Naive thymus-derived CD4-positive, alpha-beta T cell (primary cell): ENCODE measurements at regions of chr6 and their contacts with region 1.

Region 1: DNA sequence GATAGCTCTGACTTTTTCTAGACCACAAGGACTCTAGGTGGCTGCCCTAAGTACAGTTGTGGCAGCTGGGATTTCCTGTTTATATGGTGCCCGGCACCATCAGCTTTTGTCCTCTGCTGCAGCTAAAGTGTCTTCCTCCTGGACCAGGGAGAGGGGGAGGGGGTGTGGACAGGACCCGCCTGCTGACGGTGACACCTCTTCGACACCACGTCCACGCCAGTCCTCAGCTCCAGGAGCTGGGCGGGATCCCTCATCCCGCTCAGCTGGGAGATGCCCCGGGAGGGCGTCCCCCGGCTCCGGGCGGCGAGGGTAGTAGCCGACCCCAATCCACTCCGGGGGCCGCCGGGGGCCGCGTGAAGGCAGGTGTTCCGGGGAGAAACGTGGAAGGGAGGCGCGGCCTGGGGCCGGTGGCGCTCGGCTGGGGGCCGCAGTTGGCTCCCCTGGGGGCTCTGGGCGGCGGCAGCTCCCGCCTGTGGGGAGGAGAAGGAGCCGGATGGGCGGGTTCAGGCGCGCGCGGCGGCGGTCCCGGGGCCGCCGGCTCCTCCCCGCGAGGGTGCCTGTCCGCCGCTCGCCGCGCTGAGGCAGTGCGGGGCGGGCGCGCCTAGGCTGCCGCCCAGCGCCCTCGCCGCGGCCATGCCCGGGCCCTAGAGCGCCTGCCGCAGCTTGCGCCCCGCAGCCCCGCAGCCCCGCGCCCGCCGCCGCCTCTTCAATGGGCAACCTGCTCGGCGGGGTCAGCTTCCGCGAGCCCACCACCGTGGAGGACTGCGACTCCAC is at the start of gene OGFRL1:
- DNase-seq: peak; percentile 45 to 74 (median 64)
- ATAC-seq: peak; percentile 94
- H3K4me3 ChIP-seq: peak within 1 kb of the TSS; percentile 68
- H3K4me3 Mint-ChIP-seq: peak within 1 kb of the TSS; percentile 76 to 88 (median 83)
- H3K27ac ChIP-seq: peak within 1 kb of the TSS; percentile 70
- H3K27ac Mint-ChIP-seq: peak within 1 kb of the TSS; percentile 78 to 93 (median 83)
- H3K4me1 ChIP-seq: peaks cover 5 to 26% of the 10 kb centered on the region in 2 donors
- H3K4me1 Mint-ChIP-seq: peaks cover 29 to 43% (median 35%) of the 10 kb centered on the region in 7 donors
- H3K27me3 ChIP-seq: no peaks in the 10 kb centered on the region
- H3K27me3 Mint-ChIP-seq: peaks cover 0 to 24% (median 0%) of the 10 kb centered on the region in 5 donors
- total RNA-seq, gene OGFRL1: 4.3 to 30.4 (median 4.7) TPM

Region 2: GRCh38 chr6:71190809-71191208 is 97.6 kb before region 1 on chr6:
- CTCF ChIA-PET with region 1: no interaction called
- POLR2A ChIA-PET with region 1: no interaction called
- intact Hi-C with region 1: loop called in 1 of 2 experiments (anchors 2 kb)
- DNase-seq: peak in 1 of 9 donors; percentile 2
- ATAC-seq: no peak
- H3K4me3 ChIP-seq: no peak overlapping the region
- H3K4me3 Mint-ChIP-seq: no peak overlapping the region
- H3K27ac ChIP-seq: no peak overlapping the region
- H3K27ac Mint-ChIP-seq: no peak overlapping the region
- H3K4me1 ChIP-seq: no peaks in the 10 kb centered on the region
- H3K4me1 Mint-ChIP-seq: peaks cover 0 to 3% (median 0%) of the 10 kb centered on the region in 7 donors
- H3K27me3 ChIP-seq: no peaks in the 10 kb centered on the region
- H3K27me3 Mint-ChIP-seq: peaks cover 0 to 11% (median 11%) of the 10 kb centered on the region in 5 donors

Region 3: DNA sequence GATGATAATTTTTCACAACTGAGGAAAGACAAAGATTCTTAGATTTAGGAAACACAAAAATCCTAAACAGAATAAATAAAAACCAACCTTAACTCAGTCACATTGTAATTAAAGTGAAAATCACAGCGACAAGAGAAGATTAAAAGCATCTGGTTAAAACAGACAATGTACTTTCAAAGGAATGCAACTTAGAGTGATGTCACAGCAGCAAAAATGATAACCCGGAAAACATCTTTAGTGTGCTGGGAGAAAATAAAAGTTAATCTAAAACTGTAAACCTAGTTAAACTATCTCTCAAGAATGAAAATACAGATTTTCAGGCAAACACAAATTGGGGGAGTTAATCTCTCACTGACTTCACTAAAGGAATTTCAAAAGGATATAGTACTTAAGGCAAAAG is 76.6 kb before region 1 on chr6:
- CTCF ChIA-PET with region 1: no interaction called
- POLR2A ChIA-PET with region 1: no interaction called
- intact Hi-C with region 1: no loop called
- DNase-seq: no peak
- ATAC-seq: no peak
- H3K4me3 ChIP-seq: no peak overlapping the region
- H3K4me3 Mint-ChIP-seq: no peak overlapping the region
- H3K27ac ChIP-seq: no peak overlapping the region
- H3K27ac Mint-ChIP-seq: no peak overlapping the region
- H3K4me1 ChIP-seq: no peaks in the 10 kb centered on the region
- H3K4me1 Mint-ChIP-seq: no peaks in the 10 kb centered on the region
- H3K27me3 ChIP-seq: no peaks in the 10 kb centered on the region
- H3K27me3 Mint-ChIP-seq: peaks cover 5 to 26% (median 6%) of the 10 kb centered on the region in 5 donors

Region 4: GRCh38 chr6:71228461-71229041 is 59.9 kb before region 1 on chr6:
- CTCF ChIA-PET with region 1: no interaction called
- POLR2A ChIA-PET with region 1: no interaction called
- intact Hi-C with region 1: loop called in 1 of 2 experiments (anchors 5 kb)
- DNase-seq: peak in 7 of 9 donors; percentile 25 to 55 (median 40)
- ATAC-seq: peak; percentile 78
- H3K4me3 ChIP-seq: no peak overlapping the region
- H3K4me3 Mint-ChIP-seq: peak overlapping the region in 8 of 10 donors; percentile 8 to 69 (median 55)
- H3K27ac ChIP-seq: peak overlapping the region; percentile 40
- H3K27ac Mint-ChIP-seq: peak overlapping the region in 8 of 9 donors; percentile 15 to 75 (median 42)
- H3K4me1 ChIP-seq: peaks cover 10 to 13% of the 10 kb centered on the region in 2 donors
- H3K4me1 Mint-ChIP-seq: peaks cover 8 to 35% (median 25%) of the 10 kb centered on the region in 7 donors
- H3K27me3 ChIP-seq: no peaks in the 10 kb centered on the region
- H3K27me3 Mint-ChIP-seq: peaks cover 0 to 5% (median 0%) of the 10 kb centered on the region in 5 donors